ENCODE measurements at regions of chr7 and their contacts with region 1.

Region 1: GRCh38 chr7:35985126-35985754 is 167.8 kb upstream of the EEPD1 start:
- DNase-seq: peak; percentile 80
- H3K4me3 ChIP-seq: no peak overlapping the region
- H3K27ac ChIP-seq: no peak overlapping the region
- H3K4me1 ChIP-seq: no peaks in the 10 kb centered on the region
- H3K27me3 ChIP-seq: no peaks in the 10 kb centered on the region
- CTCF ChIP-seq: peak; percentile 90

Region 2: DNA sequence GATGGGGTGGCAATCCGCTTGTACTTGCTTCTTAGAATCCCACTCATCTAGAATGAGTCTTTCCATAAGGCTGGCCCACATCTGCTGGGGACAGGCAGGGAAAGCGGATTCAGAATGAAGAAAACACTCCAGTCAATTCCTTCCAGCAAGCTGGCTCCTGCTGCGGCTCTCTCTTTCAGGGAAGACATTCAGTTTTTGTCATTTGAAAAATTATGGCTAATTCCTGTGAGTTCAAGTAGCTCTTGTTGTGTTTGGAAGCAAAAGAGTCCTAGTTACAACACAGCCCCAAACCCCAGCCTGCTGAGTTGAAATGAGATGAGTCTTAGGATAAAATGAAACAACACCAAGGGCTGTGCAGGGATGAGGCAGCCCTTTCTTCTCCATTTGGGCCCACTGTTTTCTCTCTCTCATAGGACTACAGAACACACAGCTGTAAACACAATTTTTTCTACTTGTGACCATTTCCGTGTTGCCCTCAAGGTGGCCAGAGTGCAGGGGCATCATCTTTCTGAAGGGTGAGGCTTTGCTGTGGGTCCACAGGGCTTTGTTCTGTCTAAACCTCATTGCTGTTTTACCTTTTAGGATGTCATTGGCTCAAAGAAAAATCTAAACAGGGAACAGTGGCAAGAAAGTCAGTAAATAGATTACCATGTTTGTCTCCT is 77.0 kb after region 1 on chr7:
- intact Hi-C with region 1: no loop called
- DNase-seq: no peak
- H3K4me3 ChIP-seq: no peak overlapping the region
- H3K27ac ChIP-seq: no peak overlapping the region
- H3K4me1 ChIP-seq: no peaks in the 10 kb centered on the region
- H3K27me3 ChIP-seq: no peaks in the 10 kb centered on the region
- CTCF ChIP-seq: no peak

Region 3: DNA sequence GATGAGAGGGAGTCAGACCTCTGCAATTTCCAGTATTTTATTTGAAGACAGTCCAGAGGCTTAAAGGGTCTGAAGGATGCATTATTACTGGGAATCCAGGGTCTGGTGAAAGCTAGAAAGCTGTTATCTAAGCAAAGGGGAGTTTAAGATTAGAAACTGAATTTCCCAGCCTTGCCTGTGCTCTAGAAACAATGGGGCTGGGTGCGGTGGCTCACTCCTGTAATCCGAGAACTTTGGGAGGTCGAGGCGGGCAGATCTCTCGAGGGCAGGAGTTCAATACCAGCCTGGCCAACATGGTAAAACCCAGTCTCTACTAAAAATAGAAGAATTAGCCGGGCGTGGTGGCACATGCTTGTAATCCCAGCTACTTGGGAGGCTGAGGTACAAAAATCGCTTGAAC is 332.9 kb after region 1 on chr7:
- intact Hi-C with region 1: loop called (anchors 2 kb)
- DNase-seq: no peak
- H3K4me3 ChIP-seq: no peak overlapping the region
- H3K27ac ChIP-seq: no peak overlapping the region
- H3K4me1 ChIP-seq: no peaks in the 10 kb centered on the region
- H3K27me3 ChIP-seq: no peaks in the 10 kb centered on the region
- CTCF ChIP-seq: no peak